ENCODE measurements at regions of chr16 and their contacts with region 1.

Region 1: DNA sequence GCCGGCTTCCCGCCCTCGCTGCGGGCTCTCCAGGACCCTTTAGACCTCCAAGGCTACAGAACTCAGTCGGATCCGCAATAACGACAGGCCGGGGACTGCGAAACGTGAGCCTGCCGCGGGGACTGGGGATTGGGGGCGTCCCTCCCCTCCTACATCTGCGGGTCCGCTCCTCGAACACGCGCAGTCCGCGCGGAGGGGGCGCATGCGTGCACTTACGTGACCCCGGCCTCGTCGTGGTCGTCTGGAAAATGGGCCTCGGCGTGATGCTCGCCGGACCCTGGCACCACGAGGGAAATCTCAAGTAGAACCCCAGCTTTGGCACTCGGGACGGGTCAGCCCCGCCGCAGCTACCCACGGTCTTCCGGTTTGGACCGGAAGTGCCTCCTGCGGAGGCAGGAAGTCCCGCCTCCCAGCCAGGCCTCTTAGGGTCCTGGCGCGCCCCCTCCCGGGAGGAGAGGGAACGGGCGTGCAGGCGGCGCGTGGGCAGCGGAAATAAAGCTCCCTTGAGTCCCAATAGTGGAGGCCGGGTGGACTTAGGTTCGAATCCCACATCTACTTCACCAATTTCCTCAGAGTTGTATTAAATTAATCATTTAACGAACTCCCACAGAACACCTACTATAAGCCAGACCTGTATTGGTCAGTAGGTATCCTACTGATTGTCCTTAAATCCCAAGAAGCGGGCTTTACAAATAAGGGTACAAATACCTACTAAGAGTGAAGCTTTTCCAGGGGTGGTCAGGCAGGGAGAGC is at the start of gene TAF1C:
- DNase-seq: peak; percentile 96
- H3K4me3 ChIP-seq: peak within 1 kb of the TSS; percentile 75 to 99 (median 88)
- H3K27ac ChIP-seq: peak within 1 kb of the TSS; percentile 72 to 87 (median 76)
- H3K4me1 ChIP-seq: peaks cover 0 to 23% (median 12%) of the 10 kb centered on the region in 4 donors
- H3K27me3 ChIP-seq: no peaks in the 10 kb centered on the region
- CTCF ChIP-seq: peak; percentile 72 to 98 (median 86)
- EP300 ChIP-seq: no peak
- POLR2A ChIP-seq: peak in 1 of 2 donors; percentile 45
- total RNA-seq, gene TAF1C: 19.6 to 49.0 (median 30.0) TPM

Region 2: GRCh38 chr16:83826146-83826913 is 360.5 kb before region 1 on chr16:
- intact Hi-C with region 1: loop called (anchors 10 kb)
- DNase-seq: peak; percentile 95
- H3K4me3 ChIP-seq: no peak overlapping the region
- H3K27ac ChIP-seq: no peak overlapping the region
- H3K4me1 ChIP-seq: peaks cover 2 to 6% (median 4%) of the 10 kb centered on the region in 4 donors
- H3K27me3 ChIP-seq: no peaks in the 10 kb centered on the region
- CTCF ChIP-seq: peak; percentile 67 to 95 (median 90)
- EP300 ChIP-seq: no peak
- POLR2A ChIP-seq: no peak

Region 3: GRCh38 chr16:84087466-84088151 is 99.3 kb before region 1 on chr16:
- intact Hi-C with region 1: loop called (anchors 2 kb)
- DNase-seq: no peak
- H3K4me3 ChIP-seq: no peak overlapping the region
- H3K27ac ChIP-seq: no peak overlapping the region
- H3K4me1 ChIP-seq: peaks cover 0 to 11% (median 3%) of the 10 kb centered on the region in 4 donors
- H3K27me3 ChIP-seq: no peaks in the 10 kb centered on the region
- CTCF ChIP-seq: no peak
- EP300 ChIP-seq: no peak
- POLR2A ChIP-seq: no peak

Region 4: DNA sequence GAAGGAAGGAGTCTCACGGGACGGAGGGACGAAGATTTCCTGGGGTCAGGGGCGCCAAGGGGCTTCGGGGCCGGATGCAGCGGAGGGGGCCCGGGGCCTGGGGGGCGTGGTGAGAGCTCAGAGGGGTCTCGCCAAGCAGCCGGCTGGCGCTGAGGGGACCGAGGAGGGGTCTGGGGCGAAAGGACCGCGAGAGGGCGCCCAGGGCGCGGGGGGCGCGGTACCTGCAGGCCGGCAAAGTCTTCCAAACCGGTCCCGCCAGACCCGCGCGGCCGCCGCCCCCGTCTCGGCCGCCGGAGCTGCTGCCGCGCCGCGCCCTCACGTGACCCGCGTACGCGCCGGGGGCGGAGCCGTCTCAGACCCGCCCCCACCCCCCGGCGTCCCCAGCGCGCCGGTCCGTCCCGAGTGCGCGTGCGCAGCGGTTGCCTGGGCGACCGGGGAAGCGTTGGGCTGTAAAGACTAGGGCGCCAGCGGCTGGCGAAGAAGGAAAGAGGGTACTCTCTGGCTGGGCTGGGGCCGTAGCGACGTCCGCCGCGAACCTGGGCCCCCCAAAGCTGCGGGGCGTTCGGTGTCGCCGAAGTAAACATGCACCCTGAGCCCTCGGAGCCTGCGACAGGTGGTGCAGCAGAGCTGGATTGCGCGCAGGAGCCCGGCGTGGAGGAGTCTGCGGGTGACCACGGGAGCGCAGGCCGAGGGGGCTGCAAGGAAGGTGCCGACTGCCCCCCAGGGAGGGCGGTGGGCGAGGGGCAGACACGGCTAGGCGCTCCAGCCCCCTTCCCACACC is 41.8 kb before region 1 on chr16 and contains the starts of genes DNAAF1 and HSDL1:
- intact Hi-C with region 1: loop called (anchors 1 kb)
- DNase-seq: peak; percentile 94
- H3K4me3 ChIP-seq: peak within 1 kb of the TSS; percentile 97 to 99 (median 98)
- H3K27ac ChIP-seq: peak within 1 kb of the TSS; percentile 75 to 85 (median 80)
- H3K4me1 ChIP-seq: peaks cover 0 to 29% (median 17%) of the 10 kb centered on the region in 4 donors
- H3K27me3 ChIP-seq: no peaks in the 10 kb centered on the region
- CTCF ChIP-seq: no peak
- EP300 ChIP-seq: no peak
- POLR2A ChIP-seq: no peak
- total RNA-seq, gene DNAAF1: 0.36 TPM in 1 of 4 donors, not detected in the others
- total RNA-seq, gene HSDL1: 11.4 to 27.8 (median 18.4) TPM

Region 5: DNA sequence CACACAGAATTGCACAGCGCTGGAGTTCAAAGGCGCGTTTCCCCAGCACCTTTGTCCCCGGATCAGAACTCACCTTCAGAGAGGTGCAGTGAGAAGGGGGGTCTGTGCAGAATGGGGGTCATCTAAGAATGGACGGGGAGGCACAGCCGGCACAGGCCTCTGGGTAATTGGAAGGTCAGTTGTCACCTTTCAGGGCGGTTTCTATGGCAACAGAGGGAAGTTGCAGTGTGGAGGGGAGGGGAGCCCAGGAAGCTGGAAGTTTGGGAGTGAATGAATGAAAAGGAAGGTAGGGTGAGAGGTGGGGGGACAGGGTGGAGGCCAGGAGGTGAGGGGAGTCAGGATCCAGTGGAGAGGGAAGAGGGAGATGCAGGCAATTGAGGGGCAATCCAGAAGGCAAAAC is 65.3 kb after region 1 on chr16:
- intact Hi-C with region 1: no loop called
- DNase-seq: no peak
- H3K4me3 ChIP-seq: no peak overlapping the region
- H3K27ac ChIP-seq: no peak overlapping the region
- H3K4me1 ChIP-seq: no peaks in the 10 kb centered on the region
- H3K27me3 ChIP-seq: no peaks in the 10 kb centered on the region
- CTCF ChIP-seq: no peak
- EP300 ChIP-seq: no peak
- POLR2A ChIP-seq: no peak

Region 6: DNA sequence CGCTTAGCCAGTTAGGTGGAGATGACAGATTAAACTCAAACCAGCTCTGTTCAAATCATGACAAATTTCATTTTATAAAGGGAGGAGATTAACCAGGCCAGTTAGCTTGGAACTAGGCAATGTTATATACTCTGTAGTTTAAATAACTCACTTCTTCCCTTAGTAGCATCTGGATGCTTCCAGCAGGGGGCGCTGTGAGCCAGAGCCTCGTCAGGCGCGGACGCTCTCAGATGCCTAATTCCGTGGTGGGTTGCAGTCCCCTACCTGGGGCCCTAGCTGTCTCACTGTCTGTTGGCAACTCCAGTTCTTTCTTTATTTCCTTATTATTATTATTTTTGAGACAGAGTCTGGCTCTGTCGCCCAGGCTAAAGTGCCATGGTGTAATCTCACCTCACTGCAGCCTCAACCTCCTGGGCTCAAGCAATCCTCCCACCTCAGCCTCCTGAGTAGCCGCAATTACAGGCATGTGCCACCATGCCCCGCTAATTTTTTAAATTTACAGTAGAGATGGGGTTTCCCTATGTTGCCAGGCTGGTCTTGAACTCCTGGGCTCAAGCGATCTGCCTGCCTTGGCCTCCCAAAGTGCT is 90.5 kb after region 1 on chr16:
- intact Hi-C with region 1: no loop called
- DNase-seq: peak; percentile 80
- H3K4me3 ChIP-seq: no peak overlapping the region
- H3K27ac ChIP-seq: no peak overlapping the region
- H3K4me1 ChIP-seq: peaks cover 0 to 5% (median 0%) of the 10 kb centered on the region in 4 donors
- H3K27me3 ChIP-seq: no peaks in the 10 kb centered on the region
- CTCF ChIP-seq: peak; percentile 82 to 93 (median 88)
- EP300 ChIP-seq: no peak
- POLR2A ChIP-seq: no peak

Region 7: DNA sequence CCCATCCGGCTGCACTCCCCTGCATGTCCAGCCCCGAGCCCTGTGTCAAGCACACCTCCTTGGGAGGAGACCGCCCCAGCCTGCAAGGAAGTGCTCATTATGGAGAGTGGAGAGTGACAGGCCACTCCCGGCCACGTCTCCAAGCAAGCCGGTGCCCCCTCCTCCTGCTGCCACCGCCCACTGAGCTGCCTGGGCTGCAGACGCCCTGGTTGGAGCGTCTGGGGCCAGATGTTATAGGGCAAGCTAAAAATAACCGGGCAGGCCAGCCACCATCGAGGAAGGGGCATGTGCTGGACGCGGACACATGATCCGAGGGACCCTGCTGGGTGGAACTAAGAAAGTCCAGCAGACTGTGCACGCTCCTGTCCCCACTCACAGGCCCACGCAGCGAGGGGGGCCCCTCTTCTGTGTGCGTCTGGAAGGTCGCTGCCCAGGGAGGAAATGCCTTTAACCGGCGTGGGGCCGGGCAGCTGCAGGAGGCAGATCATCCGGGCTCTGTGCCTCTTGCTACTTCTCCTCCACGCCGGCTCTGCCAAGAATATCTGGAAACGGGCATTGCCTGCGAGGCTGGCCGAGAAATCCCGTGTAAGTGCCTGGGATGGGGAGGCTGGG is 107.8 kb after region 1 on chr16 and contains the start of gene WFDC1:
- intact Hi-C with region 1: no loop called
- DNase-seq: peak; percentile 80
- H3K4me3 ChIP-seq: peak within 1 kb of the TSS; percentile 7 to 56 (median 44)
- H3K27ac ChIP-seq: peak within 1 kb of the TSS; percentile 63 to 94 (median 88)
- H3K4me1 ChIP-seq: peaks cover 0 to 83% (median 63%) of the 10 kb centered on the region in 4 donors
- H3K27me3 ChIP-seq: no peaks in the 10 kb centered on the region
- CTCF ChIP-seq: peak in 1 of 4 experiments; percentile 5
- EP300 ChIP-seq: no peak
- POLR2A ChIP-seq: peak in 1 of 2 donors; percentile 47
- total RNA-seq, gene WFDC1: 15.3 to 173 (median 103) TPM

Region 8: GRCh38 chr16:84380405-84380804 is 193.5 kb after region 1 on chr16:
- intact Hi-C with region 1: no loop called
- DNase-seq: no peak
- H3K4me3 ChIP-seq: no peak overlapping the region
- H3K27ac ChIP-seq: no peak overlapping the region
- H3K4me1 ChIP-seq: no peaks in the 10 kb centered on the region
- H3K27me3 ChIP-seq: no peaks in the 10 kb centered on the region
- CTCF ChIP-seq: no peak
- EP300 ChIP-seq: no peak
- POLR2A ChIP-seq: no peak

Region 9: GRCh38 chr16:84484579-84485254 is 297.9 kb after region 1 on chr16:
- intact Hi-C with region 1: loop called (anchors 10 kb)
- DNase-seq: no peak
- H3K4me3 ChIP-seq: no peak overlapping the region
- H3K27ac ChIP-seq: no peak overlapping the region
- H3K4me1 ChIP-seq: peaks cover 0 to 4% (median 0%) of the 10 kb centered on the region in 4 donors
- H3K27me3 ChIP-seq: no peaks in the 10 kb centered on the region
- CTCF ChIP-seq: peak; percentile 66 to 84 (median 72)
- EP300 ChIP-seq: no peak
- POLR2A ChIP-seq: no peak

Measured in sigmoid colon (tissue), 7 donors.